ENCODE measurements at regions of chr11 and their contacts with region 1.

Region 1: DNA sequence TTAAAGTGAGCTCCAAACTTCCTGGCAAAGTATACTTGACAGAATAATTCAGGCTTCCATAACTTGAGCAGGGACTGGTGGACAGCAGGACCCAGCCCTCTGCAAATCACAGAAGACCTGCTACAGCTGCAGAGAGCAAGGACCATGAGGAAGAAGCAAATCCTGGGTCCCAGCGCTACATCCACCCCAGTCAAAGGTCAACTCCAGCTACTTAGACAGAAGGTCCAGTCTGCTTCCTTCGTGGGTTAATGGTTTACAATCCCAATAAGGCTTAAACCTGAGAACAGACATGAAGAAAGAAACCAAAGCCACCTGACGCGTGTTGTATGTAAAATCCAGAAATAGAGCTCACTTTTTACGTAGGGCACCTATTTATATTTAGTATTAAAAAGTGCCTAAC is 57.7 kb downstream of the SHANK2 start:
- DNase-seq: no peak
- ATAC-seq: no peak
- H3K4me3 ChIP-seq: no peak overlapping the region
- H3K4me3 Mint-ChIP-seq: no peak overlapping the region
- H3K27ac ChIP-seq: no peak overlapping the region
- H3K27ac Mint-ChIP-seq: no peak overlapping the region
- H3K4me1 ChIP-seq: no peaks in the 10 kb centered on the region
- H3K4me1 Mint-ChIP-seq: no peaks in the 10 kb centered on the region
- H3K27me3 ChIP-seq: peaks cover 0 to 10% of the 10 kb centered on the region in 2 experiments
- H3K27me3 Mint-ChIP-seq: peaks cover 0 to 3% of the 10 kb centered on the region in 2 donors

Region 2: DNA sequence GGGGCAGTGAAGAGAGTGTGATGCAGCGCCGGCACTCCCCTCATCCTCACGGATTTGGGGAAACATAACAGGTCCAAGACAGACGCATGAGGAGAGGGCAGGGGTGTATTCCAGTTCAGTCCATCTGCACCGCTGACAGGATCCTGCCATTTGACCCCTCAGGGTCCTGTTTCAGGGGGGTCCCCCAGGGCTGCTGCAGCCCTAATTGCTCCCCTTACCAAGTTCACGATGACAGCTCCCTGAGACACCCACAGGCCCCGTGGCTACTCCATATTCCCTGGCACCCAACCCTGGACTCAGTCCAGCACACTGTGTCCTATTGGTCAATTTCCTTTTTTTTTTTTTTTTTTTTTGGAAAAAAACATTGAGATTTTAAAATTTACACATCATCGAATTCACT is 16.2 kb after region 1 on chr11:
- CTCF ChIA-PET with region 1: no interaction called
- POLR2A ChIA-PET with region 1: interaction called in 1 of 2 experiments, 13 read pairs
- DNase-seq: no peak
- ATAC-seq: no peak
- H3K4me3 ChIP-seq: no peak overlapping the region
- H3K4me3 Mint-ChIP-seq: no peak overlapping the region
- H3K27ac ChIP-seq: no peak overlapping the region
- H3K27ac Mint-ChIP-seq: no peak overlapping the region
- H3K4me1 ChIP-seq: no peaks in the 10 kb centered on the region
- H3K4me1 Mint-ChIP-seq: no peaks in the 10 kb centered on the region
- H3K27me3 ChIP-seq: peaks cover 0 to 18% of the 10 kb centered on the region in 2 experiments
- H3K27me3 Mint-ChIP-seq: peaks cover 11% of the 10 kb centered on the region in 2 donors